ENCODE measurements at regions of chr6 and their contacts with region 1.

Region 1: DNA sequence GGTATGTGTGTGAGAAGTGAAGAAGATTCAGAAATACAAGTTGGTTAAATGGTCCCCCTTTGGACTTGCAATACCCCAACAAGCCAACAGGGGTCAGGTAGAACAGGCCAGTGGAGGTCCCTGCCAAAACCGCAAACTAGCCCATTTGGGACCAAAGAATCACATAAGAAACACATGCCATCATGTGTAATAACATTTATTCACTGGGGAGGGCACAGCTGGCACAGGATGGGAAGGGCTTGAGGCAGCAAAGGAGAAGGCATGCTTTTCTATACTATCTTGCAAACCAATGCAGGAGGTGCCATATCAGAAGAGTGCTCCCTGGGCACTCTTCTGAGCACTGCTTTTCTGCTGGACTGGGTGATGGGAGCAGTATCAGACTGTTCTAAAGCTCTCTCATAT is 116.1 kb upstream of the TRAF3IP2 start:
- DNase-seq: no peak
- H3K4me3 ChIP-seq: no peak overlapping the region
- H3K27ac ChIP-seq: no peak overlapping the region
- H3K4me1 ChIP-seq: peaks cover 3 to 13% (median 8%) of the 10 kb centered on the region in 4 donors
- H3K27me3 ChIP-seq: no peaks in the 10 kb centered on the region
- CTCF ChIP-seq: peak; percentile 30 to 35

Region 2: DNA sequence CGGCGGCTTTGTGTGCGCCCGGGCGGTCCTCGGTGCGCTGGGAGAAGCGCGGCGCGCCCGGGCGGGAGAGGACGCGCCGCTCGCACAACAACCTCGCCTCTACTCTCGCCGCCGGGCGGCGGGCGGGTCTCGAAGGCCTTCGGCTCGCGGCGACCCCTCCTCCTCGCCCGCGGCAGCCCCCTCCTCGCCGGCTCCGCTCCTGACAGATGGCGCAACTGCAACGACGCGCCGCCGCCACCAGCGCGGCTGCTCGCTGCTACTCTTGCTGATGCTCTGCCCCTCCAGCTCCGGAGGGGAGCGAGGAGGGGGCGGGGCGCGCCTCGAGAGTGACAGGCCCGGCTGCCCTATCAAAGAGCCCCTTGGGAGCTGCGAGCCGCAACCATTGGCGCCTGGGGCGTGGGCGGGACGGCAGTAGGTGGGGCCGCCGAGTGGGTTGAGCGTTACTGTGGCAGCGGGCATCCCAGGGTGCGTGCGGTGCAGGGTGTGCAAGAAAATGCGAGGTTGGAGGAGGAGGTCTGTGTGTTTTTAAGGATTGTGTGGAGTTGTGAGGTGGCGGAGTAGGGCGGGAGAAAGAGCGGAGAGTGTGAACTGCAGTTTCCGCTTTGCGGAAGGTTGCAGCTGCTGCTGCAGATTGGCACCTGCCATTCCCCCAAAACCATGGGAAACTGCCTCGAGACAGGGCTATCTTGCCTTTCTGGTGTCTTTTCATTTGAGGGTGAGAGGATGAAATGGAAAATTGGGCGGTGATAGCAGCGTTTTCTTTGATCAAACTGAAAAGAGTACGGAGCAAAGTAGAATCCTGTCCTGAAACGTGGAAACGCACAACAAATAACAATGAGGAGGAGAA is 151.6 kb after region 1 on chr6 and contains the start of gene FYN:
- intact Hi-C with region 1: loop called (anchors 10 kb)
- DNase-seq: peak; percentile 98
- H3K4me3 ChIP-seq: peak within 1 kb of the TSS; percentile 67 to 80
- H3K27ac ChIP-seq: peak within 1 kb of the TSS; percentile 65 to 69
- H3K4me1 ChIP-seq: peaks cover 0 to 20% (median 12%) of the 10 kb centered on the region in 4 donors
- H3K27me3 ChIP-seq: peaks cover 0 to 6% of the 10 kb centered on the region in 2 donors
- CTCF ChIP-seq: peak; percentile 49 to 63